ENCODE measurements at regions of chr17 and their contacts with region 1.

Region 1: GRCh38 chr17:50949989-50950881 is 84.1 kb upstream of the TOB1 start:
- DNase-seq: peak; percentile 74 to 77
- H3K4me3 ChIP-seq: no peak overlapping the region
- H3K27ac ChIP-seq: peak overlapping the region; percentile 81 to 95 (median 87)
- H3K4me1 ChIP-seq: peaks cover 31 to 53% of the 10 kb centered on the region in 2 donors
- H3K27me3 ChIP-seq: no peaks in the 10 kb centered on the region
- CTCF ChIP-seq: peak; percentile 54 to 88 (median 69)
- POLR2A ChIP-seq: peak in 1 of 2 donors; percentile 36

Region 2: GRCh38 chr17:50783193-50783660 is 167.0 kb before region 1 on chr17:
- intact Hi-C with region 1: loop called (anchors 10 kb)
- DNase-seq: peak; percentile 82 to 85
- H3K4me3 ChIP-seq: no peak overlapping the region
- H3K27ac ChIP-seq: no peak overlapping the region
- H3K4me1 ChIP-seq: peaks cover 9 to 21% of the 10 kb centered on the region in 2 donors
- H3K27me3 ChIP-seq: no peaks in the 10 kb centered on the region
- CTCF ChIP-seq: peak; percentile 91 to 99 (median 98)
- POLR2A ChIP-seq: no peak

Region 3: DNA sequence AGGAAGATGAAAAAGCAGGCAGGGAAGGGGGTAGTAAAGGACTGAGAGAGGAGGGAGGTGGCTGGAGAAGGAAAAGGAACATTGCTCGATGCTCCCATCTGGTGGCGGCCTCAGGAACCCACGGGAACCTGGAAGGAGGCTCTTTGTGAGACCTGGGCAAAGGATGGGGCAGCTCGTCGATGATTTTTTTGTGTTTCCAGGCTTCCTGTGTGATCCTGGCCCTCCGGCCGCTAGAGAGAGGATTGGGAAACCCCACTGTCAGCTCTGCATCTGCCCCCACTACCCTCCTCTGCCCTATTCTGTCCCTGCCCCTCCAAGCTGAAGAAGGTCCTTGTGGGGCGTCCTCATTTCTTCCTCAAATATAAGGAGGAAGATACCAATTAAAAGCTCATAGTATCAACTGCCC is 108.3 kb before region 1 on chr17:
- intact Hi-C with region 1: loop called (anchors 5 kb)
- DNase-seq: peak; percentile 64 to 72
- H3K4me3 ChIP-seq: no peak overlapping the region
- H3K27ac ChIP-seq: no peak overlapping the region
- H3K4me1 ChIP-seq: no peaks in the 10 kb centered on the region
- H3K27me3 ChIP-seq: no peaks in the 10 kb centered on the region
- CTCF ChIP-seq: peak; percentile 44 to 91 (median 79)
- POLR2A ChIP-seq: no peak

Region 4: DNA sequence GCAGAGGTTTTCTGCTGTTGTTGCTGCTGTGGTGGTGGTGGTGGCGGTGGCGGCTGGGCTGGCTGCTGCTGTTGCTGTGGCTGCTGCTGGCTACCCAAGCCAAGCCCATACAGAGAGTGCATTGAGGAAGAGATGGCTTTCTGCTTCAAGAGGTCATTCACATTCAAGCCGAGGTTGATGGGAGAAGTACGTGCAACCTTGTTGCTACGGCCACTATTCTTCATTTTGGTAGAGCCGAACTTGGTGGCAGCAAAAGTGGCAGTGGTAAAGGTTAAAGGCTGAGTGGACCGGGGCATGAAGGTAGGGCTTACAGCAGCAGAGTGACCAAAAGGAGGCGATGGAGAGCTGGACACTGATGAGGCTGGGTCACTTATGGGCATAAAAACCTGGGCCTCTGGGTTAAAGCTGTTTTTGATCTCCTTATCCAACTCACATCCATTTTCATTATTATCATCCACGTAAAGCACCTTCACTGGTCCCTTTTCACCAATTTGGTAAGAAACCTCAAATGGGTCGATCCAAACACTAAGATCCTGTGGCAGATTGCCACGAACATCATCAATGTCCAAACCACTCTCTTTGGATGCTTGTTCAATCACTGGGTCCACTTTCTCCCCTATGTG is 86.9 kb before region 1 on chr17:
- intact Hi-C with region 1: loop called (anchors 5 kb)
- DNase-seq: peak; percentile 57 to 61
- H3K4me3 ChIP-seq: peak overlapping the region in 1 of 3 donors; percentile 100
- H3K27ac ChIP-seq: peak overlapping the region in 2 of 3 donors; percentile 100
- H3K4me1 ChIP-seq: peaks cover 32 to 39% of the 10 kb centered on the region in 2 donors
- H3K27me3 ChIP-seq: no peaks in the 10 kb centered on the region
- CTCF ChIP-seq: peak in 5 of 6 experiments; percentile 15 to 59 (median 49)
- POLR2A ChIP-seq: no peak